HCT116 (cell line): ENCODE measurements at regions of chr19 and their contacts with region 1.

Region 1: DNA sequence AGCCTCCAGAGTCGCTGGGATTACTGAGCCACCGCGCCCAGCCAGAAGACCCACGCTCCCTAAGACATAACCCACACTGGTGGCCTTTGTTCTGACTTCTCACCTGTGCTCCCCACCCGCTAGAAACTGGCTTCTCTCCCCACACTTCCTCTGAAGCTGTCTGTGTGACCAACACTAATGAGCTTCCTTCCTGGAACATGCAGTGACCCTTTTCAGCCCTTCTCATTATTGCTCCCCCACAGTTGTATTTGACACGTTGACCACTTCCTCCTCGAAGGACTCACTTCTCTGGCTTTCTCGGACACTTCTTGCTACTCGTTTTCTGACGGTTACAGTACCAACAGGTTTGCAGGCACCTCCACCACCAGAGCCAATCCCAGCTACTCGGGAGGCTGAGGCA is 10.9 kb downstream of the NCR1 start:
- DNase-seq: no peak
- ATAC-seq: no peak
- H3K4me3 ChIP-seq: no peak overlapping the region
- H3K27ac ChIP-seq: no peak overlapping the region
- H3K4me1 ChIP-seq: no peaks in the 10 kb centered on the region
- H3K27me3 ChIP-seq: no peaks in the 10 kb centered on the region
- CTCF ChIP-seq: no peak
- POLR2A ChIP-seq: no peak
- RAD21 ChIP-seq: no peak

Region 2: DNA sequence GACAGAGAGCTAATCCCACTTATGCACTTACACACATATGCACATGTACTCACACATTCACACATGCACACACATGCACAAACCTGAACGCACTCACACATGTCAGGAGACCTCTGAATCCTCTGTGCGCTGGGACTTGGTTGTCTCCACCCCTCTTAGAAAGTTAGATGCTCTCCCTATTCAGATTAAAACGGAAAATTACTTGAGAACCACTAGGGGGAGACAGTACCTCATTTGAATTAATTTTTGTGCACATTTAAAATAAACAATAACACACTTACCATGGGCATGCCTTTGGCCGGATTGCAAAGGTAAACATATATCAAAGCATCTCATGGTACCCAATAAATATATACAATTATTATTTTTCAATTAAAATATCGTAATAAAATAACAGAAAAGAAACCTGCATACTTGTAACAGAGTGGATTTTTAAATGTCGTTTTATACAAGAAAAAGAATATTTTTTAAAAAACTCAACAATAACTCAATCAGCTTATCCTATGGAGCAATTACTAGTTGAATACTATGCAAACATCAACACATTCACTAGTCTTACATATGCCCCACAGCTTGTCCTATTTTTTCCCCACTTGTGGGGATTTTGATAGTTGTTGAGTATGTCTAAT is 263.5 kb before region 1 on chr19:
- CTCF ChIA-PET with region 1: no interaction called
- POLR2A ChIA-PET with region 1: no interaction called
- RAD21 ChIA-PET with region 1: no interaction called
- intact Hi-C with region 1: loop called (anchors 1 kb)
- DNase-seq: peak; percentile 31
- ATAC-seq: peak; percentile 84
- H3K4me3 ChIP-seq: no peak overlapping the region
- H3K27ac ChIP-seq: no peak overlapping the region
- H3K4me1 ChIP-seq: no peaks in the 10 kb centered on the region
- H3K27me3 ChIP-seq: peaks cover 8% of the 10 kb centered on the region; the same call in 1 of the 2 replicates
- CTCF ChIP-seq: peak; percentile 44 to 59 (median 56); a peak in 5 of 6 replicates
- POLR2A ChIP-seq: no peak
- RAD21 ChIP-seq: peak; percentile 61

Region 3: GRCh38 chr19:54881867-54882266 is 35.0 kb before region 1 on chr19:
- CTCF ChIA-PET with region 1: interaction called, 13 read pairs
- POLR2A ChIA-PET with region 1: no interaction called
- RAD21 ChIA-PET with region 1: interaction called in 1 of 2 experiments, 4 read pairs
- intact Hi-C with region 1: loop called (anchors 1 kb)
- DNase-seq: no peak
- ATAC-seq: no peak
- H3K4me3 ChIP-seq: no peak overlapping the region
- H3K27ac ChIP-seq: no peak overlapping the region
- H3K4me1 ChIP-seq: no peaks in the 10 kb centered on the region
- H3K27me3 ChIP-seq: peaks cover 8% of the 10 kb centered on the region; the same call in 1 of the 2 replicates
- CTCF ChIP-seq: no peak
- POLR2A ChIP-seq: no peak
- RAD21 ChIP-seq: no peak

Region 4: GRCh38 chr19:55044673-55045443 is 128.0 kb after region 1 on chr19:
- CTCF ChIA-PET with region 1: no interaction called
- POLR2A ChIA-PET with region 1: no interaction called
- RAD21 ChIA-PET with region 1: no interaction called
- intact Hi-C with region 1: no loop called
- DNase-seq: no peak
- ATAC-seq: peak; percentile 23; the same call in 1 of the 2 replicates
- H3K4me3 ChIP-seq: no peak overlapping the region
- H3K27ac ChIP-seq: peak overlapping the region; percentile 24; the same call in 1 of the 2 replicates
- H3K4me1 ChIP-seq: no peaks in the 10 kb centered on the region
- H3K27me3 ChIP-seq: no peaks in the 10 kb centered on the region
- CTCF ChIP-seq: no peak; a peak in 1 of 6 replicates
- POLR2A ChIP-seq: no peak
- RAD21 ChIP-seq: no peak